Activated CD8-positive, alpha-beta memory T cell treated with anti-CD3 and anti-CD28 coated beads, Interleukin-2, amount 10 ng/mL, durations not matched to agents 7 days and 5 days (primary cell): ENCODE measurements at regions of chr3 and their contacts with region 1.

Region 1: GRCh38 chr3:136380530-136380929 is 130.4 kb downstream of the PCCB start:
- DNase-seq: no peak
- ATAC-seq: no peak
- H3K4me3 Mint-ChIP-seq: no peak overlapping the region
- H3K27ac Mint-ChIP-seq: no peak overlapping the region
- H3K4me1 Mint-ChIP-seq: peaks cover 5% of the 10 kb centered on the region
- H3K27me3 Mint-ChIP-seq: no peaks in the 10 kb centered on the region

Region 2: DNA sequence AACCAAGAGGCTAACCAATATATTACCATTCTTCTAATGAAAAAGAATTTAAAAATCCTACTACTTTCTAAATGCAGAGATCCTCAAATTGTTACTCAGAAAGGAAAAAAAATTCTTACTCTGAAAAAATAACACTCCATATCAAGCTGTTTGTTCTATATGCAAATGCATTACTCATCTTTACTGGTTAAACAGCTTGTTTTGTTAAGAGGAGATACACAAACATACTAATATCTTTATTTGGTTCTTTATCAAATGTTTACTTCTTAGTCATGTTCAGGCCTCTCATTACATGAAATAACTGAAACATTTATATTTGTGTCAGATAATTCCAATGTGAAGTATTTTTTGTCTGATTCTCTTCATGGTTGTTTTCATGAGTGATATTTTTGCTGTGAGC is 16.4 kb after region 1 on chr3:
- CTCF ChIA-PET with region 1: interaction called, 10 read pairs
- DNase-seq: no peak
- ATAC-seq: no peak
- H3K4me3 Mint-ChIP-seq: no peak overlapping the region
- H3K27ac Mint-ChIP-seq: no peak overlapping the region
- H3K4me1 Mint-ChIP-seq: no peaks in the 10 kb centered on the region
- H3K27me3 Mint-ChIP-seq: no peaks in the 10 kb centered on the region